PC-3 (cell line): ENCODE measurements at regions of chr13 and their contacts with region 1.

Region 1: DNA sequence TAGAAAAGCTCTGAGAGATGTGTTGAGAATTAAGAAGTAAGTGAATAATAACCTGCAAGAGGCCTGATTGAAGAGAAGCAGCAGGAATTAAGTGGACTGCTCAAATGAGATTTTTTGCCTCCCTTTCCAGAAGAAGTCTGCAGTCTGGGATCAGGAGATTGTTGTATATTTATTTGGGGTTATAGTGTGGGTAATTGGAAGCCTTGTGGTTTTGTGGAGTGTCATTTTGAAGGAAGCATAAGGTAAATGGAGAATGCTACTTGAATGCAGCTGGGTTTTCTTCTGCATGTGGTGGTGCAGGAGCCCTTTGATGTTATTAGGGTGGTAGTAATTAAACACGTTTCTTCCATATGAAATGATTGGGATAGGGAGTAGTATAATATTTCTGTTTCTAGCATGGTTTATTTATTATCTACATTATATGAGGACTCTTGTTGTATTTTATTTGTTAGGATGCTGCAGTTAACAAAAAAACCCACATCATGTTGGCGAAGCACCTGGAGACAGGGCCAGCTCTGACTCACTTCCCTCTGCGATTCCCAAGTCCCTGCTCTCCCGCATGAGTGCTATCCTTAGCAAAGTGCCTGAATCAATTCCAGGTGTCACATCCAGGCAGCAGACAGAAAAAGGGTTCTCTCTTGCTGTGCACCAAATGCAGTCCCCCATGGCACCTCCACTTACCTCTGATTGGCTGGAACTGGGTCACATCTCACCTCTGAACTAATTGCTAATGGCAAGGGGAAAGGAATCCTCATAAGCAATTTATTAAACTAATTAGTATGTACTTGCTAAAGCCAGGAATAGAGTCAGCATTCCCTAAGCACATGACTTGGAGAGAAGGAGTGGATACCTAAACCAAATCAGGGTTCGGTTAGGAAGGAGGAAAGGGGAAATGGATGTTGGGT is 54.8 kb downstream of the DGKH start:
- DNase-seq: peak; percentile 74
- ATAC-seq: peak; percentile 73
- H3K4me3 ChIP-seq: no peak overlapping the region
- H3K27ac ChIP-seq: peak overlapping the region; percentile 21
- H3K4me1 ChIP-seq: peaks cover 66% of the 10 kb centered on the region
- H3K27me3 ChIP-seq: no peaks in the 10 kb centered on the region
- CTCF ChIP-seq: no peak

Region 2: GRCh38 chr13:42048682-42049453 is 54.3 kb before region 1 on chr13:
- CTCF ChIA-PET with region 1: no interaction called
- POLR2A ChIA-PET with region 1: interaction called, 27 read pairs
- intact Hi-C with region 1: loop called (anchors 5 kb)
- DNase-seq: peak; percentile 61
- ATAC-seq: peak; percentile 50
- H3K4me3 ChIP-seq: peak overlapping the region; percentile 83
- H3K27ac ChIP-seq: peak overlapping the region; percentile 85
- H3K4me1 ChIP-seq: peaks cover 12% of the 10 kb centered on the region
- H3K27me3 ChIP-seq: no peaks in the 10 kb centered on the region
- CTCF ChIP-seq: peak; percentile 29; the same call in 1 of the 2 replicates

Region 3: GRCh38 chr13:42681326-42682100 is 578.3 kb after region 1 on chr13:
- CTCF ChIA-PET with region 1: no interaction called
- POLR2A ChIA-PET with region 1: no interaction called
- intact Hi-C with region 1: no loop called
- DNase-seq: no peak
- ATAC-seq: no peak
- H3K4me3 ChIP-seq: no peak overlapping the region
- H3K27ac ChIP-seq: no peak overlapping the region
- H3K4me1 ChIP-seq: no peaks in the 10 kb centered on the region
- H3K27me3 ChIP-seq: no peaks in the 10 kb centered on the region
- CTCF ChIP-seq: no peak